Posterior vena cava (tissue), 2 donors: ENCODE measurements at regions of chr11 and their contacts with region 1.

Region 1: DNA sequence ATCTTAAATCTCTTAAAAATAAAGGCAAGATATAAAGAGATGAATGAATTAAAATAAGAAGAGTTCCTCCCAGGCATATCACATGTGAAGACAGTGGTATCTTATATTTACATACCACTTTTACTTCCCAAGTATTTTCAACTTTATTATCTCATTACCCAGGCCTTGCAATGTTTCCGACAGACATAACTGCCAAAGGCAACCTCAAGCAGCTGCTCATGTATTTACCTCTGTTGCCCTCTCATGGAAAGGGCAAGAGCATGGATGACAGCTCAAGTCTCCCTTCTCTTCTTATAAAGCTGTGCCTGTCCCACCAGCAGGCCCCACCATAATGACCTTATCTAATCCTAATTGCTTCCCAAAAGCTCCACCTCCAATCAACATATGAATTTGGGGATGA is 894.2 kb downstream of the NTM start:
- DNase-seq: no peak

Region 2: DNA sequence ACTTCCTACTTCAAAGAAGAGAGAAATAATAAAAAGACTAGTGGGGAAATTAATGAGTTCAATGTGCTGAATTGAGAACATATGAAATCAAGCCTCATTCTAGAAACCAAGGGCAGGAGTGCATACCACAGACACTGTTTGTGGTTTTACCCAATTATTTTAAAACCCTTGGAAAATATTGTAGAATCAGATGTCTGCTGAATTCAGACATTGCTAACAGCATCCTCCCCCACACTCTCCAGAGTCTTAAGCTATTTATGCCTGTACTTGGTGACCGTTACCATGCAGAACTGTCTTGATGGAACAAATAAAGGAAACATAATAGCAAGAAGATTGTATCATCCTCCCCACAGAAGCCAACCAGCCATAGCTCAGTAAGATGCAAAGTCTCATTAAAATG is 44.1 kb before region 1 on chr11:
- intact Hi-C with region 1: loop called in 1 of 2 experiments (anchors 1 kb)
- DNase-seq: no peak

Region 3: DNA sequence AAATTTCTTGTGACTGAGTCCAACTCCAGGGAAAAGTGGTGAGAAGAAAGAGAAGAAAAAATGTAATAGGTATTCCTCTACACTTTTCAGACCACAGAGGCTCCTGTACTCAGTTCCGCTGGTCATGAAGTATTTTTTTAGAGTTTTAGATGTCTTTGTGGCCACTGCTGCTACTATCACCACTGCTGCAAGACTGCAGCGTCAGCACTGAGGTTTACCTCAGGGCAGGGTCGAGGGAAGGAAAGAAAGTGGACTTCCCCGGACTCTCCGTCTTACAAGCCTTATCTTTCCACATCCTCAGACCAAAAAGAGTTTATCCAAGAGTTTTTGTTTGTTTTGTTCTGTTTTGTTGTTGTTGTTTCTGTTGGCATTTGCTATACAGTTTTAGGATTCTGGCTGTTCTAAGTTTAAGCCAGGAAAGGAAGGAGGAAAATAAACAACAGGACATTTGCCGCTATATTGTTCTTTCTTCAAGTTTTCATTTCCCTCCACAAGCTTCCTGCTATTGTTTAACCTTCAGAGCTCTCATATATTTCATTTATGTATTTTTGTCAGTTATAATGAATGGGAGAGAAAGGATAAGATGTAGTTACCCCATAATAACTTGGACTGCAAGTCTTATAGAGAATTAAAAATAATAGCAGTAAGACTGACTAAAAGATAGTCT is 25.1 kb after region 1 on chr11:
- intact Hi-C with region 1: no loop called
- DNase-seq: no peak

Region 4: GRCh38 chr11:132300283-132300682 is 35.7 kb after region 1 on chr11:
- intact Hi-C with region 1: no loop called
- DNase-seq: no peak

Region 5: DNA sequence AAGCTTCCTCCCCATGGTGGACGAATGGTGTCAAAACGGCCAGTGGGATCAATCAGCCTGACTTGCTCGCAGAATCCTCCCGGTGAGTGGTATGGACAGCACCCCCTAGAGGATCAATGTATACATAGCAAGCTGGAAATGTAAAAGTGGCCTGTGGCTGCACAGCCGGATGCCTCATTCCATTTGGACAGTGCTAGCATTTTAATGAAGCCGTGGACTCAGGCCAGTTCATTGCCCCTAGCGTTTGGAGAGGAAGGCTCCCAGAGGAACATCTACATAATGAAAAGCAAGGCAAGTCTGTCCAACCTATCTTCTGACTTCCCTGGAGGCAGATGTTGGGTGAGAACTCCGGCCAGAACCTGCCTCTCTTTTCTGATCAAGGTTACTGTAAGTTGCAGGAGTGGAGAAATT is 48.1 kb after region 1 on chr11:
- intact Hi-C with region 1: no loop called
- DNase-seq: no peak

Region 6: DNA sequence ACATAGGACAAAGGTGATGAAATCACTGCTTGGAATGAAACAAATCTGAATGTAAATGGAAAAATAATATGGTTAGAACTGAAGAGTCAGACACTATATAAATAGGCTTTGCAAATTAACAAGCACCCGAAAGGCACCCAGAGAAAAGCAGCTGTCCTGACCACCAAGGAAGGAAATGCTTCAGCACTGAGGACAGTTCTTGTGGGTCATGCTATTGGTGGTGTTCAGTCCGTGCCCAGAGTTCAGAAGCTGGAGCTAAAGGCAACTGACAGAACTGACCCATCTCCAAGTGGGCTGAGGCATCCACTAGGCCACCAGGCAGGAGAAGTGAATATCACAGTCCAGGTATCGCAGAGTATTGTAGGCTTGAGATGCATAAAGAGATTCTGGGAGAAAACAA is 1058.7 kb after region 1 on chr11:
- intact Hi-C with region 1: loop called in 1 of 2 experiments (anchors 5 kb)
- DNase-seq: no peak